Endothelial cell of umbilical vein (primary cell): ENCODE measurements at regions of chr9 and their contacts with region 1.

Region 1: GRCh38 chr9:121650217-121651007 is 1.0 kb upstream of the DAB2IP start:
- DNase-seq: peak; percentile 65
- H3K4me3 ChIP-seq: no peak overlapping the region
- H3K27ac ChIP-seq: no peak overlapping the region
- H3K4me1 ChIP-seq: peaks cover 25% of the 10 kb centered on the region
- H3K27me3 ChIP-seq: no peaks in the 10 kb centered on the region
- CTCF ChIP-seq: no peak
- POLR2A ChIP-seq: no peak

Region 2: DNA sequence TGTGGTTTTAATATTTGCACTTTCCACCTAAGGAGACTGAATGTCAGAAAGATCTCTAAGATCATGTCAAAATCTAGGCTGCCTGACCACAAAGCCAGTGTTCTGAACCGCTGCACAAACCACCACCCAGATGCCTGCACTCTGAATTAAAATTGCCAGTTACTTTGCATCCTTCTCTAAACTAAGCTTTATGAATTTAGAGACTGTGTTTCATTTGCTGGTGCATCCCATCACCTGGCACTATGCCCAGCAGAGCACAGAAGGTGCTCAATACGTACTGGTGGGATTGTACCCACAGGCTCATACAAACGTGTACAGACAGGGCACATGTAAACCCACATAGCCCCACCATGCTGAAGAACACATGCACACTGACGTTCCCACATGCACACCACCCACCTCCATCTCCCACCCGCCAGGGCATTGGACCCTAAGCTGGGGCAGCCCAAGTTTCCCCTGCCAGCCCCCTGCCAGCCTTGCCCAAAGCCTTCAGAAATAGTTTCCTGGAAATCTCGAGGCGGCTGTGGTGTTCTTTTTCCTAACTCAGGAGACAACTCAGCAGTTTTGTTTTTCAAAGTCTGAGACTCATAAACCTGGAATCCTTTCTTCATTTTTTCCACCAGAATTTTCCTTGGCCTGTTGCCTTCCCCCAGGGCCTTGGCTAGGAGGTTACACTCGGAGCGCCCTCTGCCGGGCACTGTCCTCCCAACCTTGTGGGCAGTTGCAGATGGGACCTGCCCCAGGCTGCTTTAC is 714.2 kb before region 1 on chr9:
- CTCF ChIA-PET with region 1: no interaction called
- POLR2A ChIA-PET with region 1: no interaction called
- dilution Hi-C with region 1: no loop called
- intact Hi-C with region 1: no loop called
- DNase-seq: peak; percentile 95
- H3K4me3 ChIP-seq: no peak overlapping the region
- H3K27ac ChIP-seq: peak overlapping the region; percentile 72
- H3K4me1 ChIP-seq: peaks cover 58% of the 10 kb centered on the region
- H3K27me3 ChIP-seq: no peaks in the 10 kb centered on the region
- CTCF ChIP-seq: peak; percentile 89 to 90
- POLR2A ChIP-seq: no peak

Region 3: GRCh38 chr9:121598965-121599871 is 51.2 kb before region 1 on chr9:
- CTCF ChIA-PET with region 1: no interaction called
- POLR2A ChIA-PET with region 1: no interaction called
- dilution Hi-C with region 1: no loop called
- intact Hi-C with region 1: no loop called
- DNase-seq: no peak
- H3K4me3 ChIP-seq: peak overlapping the region in 2 of 3 experiments; percentile 21 to 37
- H3K27ac ChIP-seq: no peak overlapping the region
- H3K4me1 ChIP-seq: peaks cover 4% of the 10 kb centered on the region
- H3K27me3 ChIP-seq: peaks cover 39 to 44% of the 10 kb centered on the region in 2 experiments
- CTCF ChIP-seq: no peak
- POLR2A ChIP-seq: no peak

Region 4: DNA sequence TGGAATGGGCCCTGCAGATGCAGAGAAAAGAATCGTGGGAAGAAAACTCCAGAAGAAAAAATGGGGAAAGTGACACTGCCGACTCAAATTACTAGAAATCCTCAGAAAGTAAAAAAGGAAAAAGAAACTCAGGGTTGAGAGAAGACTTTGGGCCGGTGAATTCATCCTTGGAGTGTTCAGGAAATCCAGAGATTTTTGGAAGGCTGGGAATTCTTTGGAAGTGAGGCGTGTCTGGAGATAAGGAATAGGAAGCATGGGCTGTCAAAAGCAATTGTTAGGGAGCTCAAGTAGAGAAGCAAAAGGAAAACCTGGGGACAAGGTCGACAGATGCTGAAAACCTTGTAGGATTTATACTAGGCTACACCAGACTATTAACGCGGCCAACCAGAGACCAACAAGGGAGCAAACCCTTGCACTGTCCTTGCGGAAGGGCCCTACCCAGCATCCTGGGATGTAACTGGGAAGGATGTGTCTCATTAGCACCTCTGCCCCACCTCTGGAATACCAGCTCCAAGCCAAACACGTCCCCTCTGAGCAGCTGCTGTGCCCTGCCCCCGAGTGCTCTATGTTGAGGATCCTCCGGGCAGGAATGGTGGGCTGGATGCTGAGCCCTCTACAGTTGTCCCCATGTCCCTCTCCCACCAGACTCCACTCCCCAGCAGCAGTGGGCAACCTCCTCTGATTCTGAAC is 12.6 kb after region 1 on chr9:
- CTCF ChIA-PET with region 1: interaction called, 3 read pairs
- POLR2A ChIA-PET with region 1: interaction called, 3 read pairs
- dilution Hi-C with region 1: no loop called
- intact Hi-C with region 1: loop called (anchors 1 kb)
- DNase-seq: peak; percentile 49
- H3K4me3 ChIP-seq: no peak overlapping the region
- H3K27ac ChIP-seq: no peak overlapping the region
- H3K4me1 ChIP-seq: peaks cover 20% of the 10 kb centered on the region
- H3K27me3 ChIP-seq: no peaks in the 10 kb centered on the region
- CTCF ChIP-seq: no peak
- POLR2A ChIP-seq: no peak